Panc1 (cell line): ENCODE measurements at regions of chr12 and their contacts with region 1.

Region 1: GRCh38 chr12:52139552-52140062 is 52.2 kb downstream of the KRT80 start:
- DNase-seq: no peak
- ATAC-seq: peak; percentile 73
- H3K4me3 ChIP-seq: no peak overlapping the region
- H3K27ac ChIP-seq: no peak overlapping the region
- H3K4me1 ChIP-seq: peaks cover 9% of the 10 kb centered on the region
- H3K27me3 ChIP-seq: no peaks in the 10 kb centered on the region
- CTCF ChIP-seq: peak; percentile 97

Region 2: GRCh38 chr12:52121824-52122539 is 17.6 kb before region 1 on chr12:
- CTCF ChIA-PET with region 1: no interaction called
- POLR2A ChIA-PET with region 1: no interaction called
- in situ Hi-C with region 1: no loop called
- intact Hi-C with region 1: no loop called
- DNase-seq: no peak
- ATAC-seq: peak; percentile 67
- H3K4me3 ChIP-seq: no peak overlapping the region
- H3K27ac ChIP-seq: no peak overlapping the region
- H3K4me1 ChIP-seq: no peaks in the 10 kb centered on the region
- H3K27me3 ChIP-seq: no peaks in the 10 kb centered on the region
- CTCF ChIP-seq: peak; percentile 94

Region 3: DNA sequence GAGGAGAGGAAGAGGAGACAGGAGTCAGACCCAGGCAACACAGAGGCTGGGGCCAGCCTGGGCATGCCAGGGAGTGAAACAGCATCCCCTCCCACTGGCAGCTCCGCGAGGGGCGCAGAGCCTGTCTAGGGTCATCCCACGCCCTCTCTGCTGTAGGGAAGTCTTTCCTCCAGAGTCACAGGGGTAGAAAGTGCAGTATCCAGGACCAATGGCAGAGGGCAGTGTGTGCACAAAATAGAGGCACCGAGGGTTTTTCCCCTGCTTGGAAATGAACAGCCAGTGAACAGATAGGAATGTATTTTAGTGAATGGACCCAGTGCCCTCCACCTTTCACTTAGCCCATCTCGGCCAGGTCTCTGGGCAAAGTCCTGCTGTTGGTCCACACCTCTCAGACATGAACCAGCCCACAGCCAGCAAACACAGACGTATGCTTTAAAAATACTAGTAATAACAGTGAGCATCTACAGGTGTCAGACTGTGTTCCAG is 443.4 kb after region 1 on chr12:
- CTCF ChIA-PET with region 1: no interaction called
- POLR2A ChIA-PET with region 1: no interaction called
- in situ Hi-C with region 1: no loop called
- intact Hi-C with region 1: loop called (anchors 10 kb)
- DNase-seq: peak; percentile 46
- ATAC-seq: peak; percentile 92
- H3K4me3 ChIP-seq: no peak overlapping the region
- H3K27ac ChIP-seq: no peak overlapping the region
- H3K4me1 ChIP-seq: no peaks in the 10 kb centered on the region
- H3K27me3 ChIP-seq: peaks cover 6% of the 10 kb centered on the region
- CTCF ChIP-seq: peak; percentile 84

Region 4: DNA sequence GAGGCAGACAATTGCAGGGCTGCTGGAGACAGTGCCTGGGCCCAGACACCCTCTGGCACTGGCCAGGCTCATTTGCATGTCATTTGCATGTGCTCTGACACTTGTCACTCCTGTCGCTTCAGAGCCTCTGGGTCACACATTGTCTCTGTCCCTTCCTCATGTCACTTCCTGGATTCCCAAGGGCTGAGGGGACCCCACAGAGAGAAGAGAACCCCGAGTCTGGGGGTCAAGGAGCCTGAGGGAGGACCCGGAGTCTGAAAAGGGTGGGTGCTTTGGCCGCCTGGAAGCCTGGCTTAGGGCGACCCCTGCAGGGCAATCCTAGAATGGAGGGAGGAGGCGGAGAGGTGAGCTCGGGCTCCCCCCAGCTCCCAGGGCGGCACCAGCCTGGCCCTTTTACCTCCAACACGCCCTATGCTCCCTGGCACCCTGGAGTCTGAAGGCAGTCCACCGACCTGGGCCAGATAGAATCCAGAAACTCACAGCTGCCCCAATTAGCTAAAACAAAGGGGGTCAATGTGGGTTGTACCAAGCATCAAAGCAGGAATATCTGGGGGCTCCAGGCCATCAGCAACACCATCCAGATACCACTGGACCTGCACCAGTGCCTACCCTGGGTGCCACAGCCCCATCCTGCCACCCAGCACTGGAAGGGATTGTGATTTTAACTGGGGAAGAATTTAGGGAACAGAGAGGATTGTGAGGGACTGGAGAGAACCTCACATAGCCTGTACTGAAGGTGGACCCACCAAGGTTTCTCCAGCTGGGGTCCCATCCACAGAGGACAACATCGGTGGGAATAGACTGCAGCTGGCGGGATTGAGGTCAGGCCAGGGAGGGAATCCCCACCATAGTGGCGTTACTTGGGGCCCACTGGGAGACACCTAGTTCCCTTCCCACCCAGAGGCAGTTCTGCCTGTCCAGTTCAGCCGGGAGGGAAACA is 731.0 kb after region 1 on chr12:
- CTCF ChIA-PET with region 1: interaction called, 3 read pairs
- POLR2A ChIA-PET with region 1: no interaction called
- in situ Hi-C with region 1: no loop called
- intact Hi-C with region 1: loop called (anchors 5 kb)
- DNase-seq: no peak
- ATAC-seq: peak; percentile 69
- H3K4me3 ChIP-seq: no peak overlapping the region
- H3K27ac ChIP-seq: no peak overlapping the region
- H3K4me1 ChIP-seq: peaks cover 33% of the 10 kb centered on the region
- H3K27me3 ChIP-seq: no peaks in the 10 kb centered on the region
- CTCF ChIP-seq: peak; percentile 96